CD4-positive, alpha-beta T cell (primary cell): ENCODE measurements at regions of chr2 and their contacts with region 1.

Region 1: GRCh38 chr2:201363857-201364560 is 6.9 kb upstream of the FLACC1 start:
- DNase-seq: peak in 7 of 14 experiments; percentile 3 to 75 (median 48)
- ATAC-seq: peak; percentile 97
- H3K4me3 ChIP-seq: no peak overlapping the region
- H3K4me3 Mint-ChIP-seq: no peak overlapping the region
- H3K27ac ChIP-seq: no peak overlapping the region
- H3K27ac Mint-ChIP-seq: peak overlapping the region; percentile 28
- H3K4me1 ChIP-seq: peaks cover 17% of the 10 kb centered on the region
- H3K4me1 Mint-ChIP-seq: peaks cover 36% of the 10 kb centered on the region
- H3K27me3 ChIP-seq: no peaks in the 10 kb centered on the region
- H3K27me3 Mint-ChIP-seq: no peaks in the 10 kb centered on the region
- CTCF ChIP-seq: peak; percentile 95

Region 2: DNA sequence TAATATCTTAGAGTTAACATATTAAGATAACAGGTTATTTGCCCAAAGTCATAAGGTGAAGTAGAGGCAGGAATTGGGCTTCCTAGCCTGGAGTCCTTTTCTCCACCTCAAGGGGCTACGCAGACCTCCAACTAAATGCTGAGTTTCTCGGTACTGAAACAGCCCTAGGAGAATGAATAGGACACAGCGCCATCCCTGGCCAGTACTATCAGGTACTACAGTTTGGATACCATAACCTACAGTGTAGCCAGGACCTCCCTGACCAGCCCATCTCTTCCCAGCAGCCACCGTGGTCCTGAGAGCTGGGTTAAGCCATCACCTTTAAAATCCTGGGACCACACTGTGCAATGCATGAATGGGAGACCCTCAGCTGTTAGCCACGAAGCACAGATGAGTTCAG is 88.0 kb before region 1 on chr2:
- CTCF ChIA-PET with region 1: no interaction called
- POLR2A ChIA-PET with region 1: interaction called, 5 read pairs
- intact Hi-C with region 1: loop called in 1 of 2 experiments (anchors 5 kb)
- DNase-seq: no peak
- ATAC-seq: no peak
- H3K4me3 ChIP-seq: no peak overlapping the region
- H3K4me3 Mint-ChIP-seq: no peak overlapping the region
- H3K27ac ChIP-seq: no peak overlapping the region
- H3K27ac Mint-ChIP-seq: peak overlapping the region; percentile 70
- H3K4me1 ChIP-seq: peaks cover 37% of the 10 kb centered on the region
- H3K4me1 Mint-ChIP-seq: peaks cover 72% of the 10 kb centered on the region
- H3K27me3 ChIP-seq: no peaks in the 10 kb centered on the region
- H3K27me3 Mint-ChIP-seq: no peaks in the 10 kb centered on the region
- CTCF ChIP-seq: no peak